ENCODE measurements at regions of chr15 and their contacts with region 1.

Region 1: GRCh38 chr15:57348781-57349180 is 27.5 kb upstream of the CGNL1 start:
- DNase-seq: no peak
- H3K4me3 ChIP-seq: no peak overlapping the region
- H3K27ac ChIP-seq: no peak overlapping the region
- H3K4me1 ChIP-seq: peaks cover 0 to 10% (median 4%) of the 10 kb centered on the region in 4 experiments; a peak in 4 of 7 replicates
- H3K27me3 ChIP-seq: no peaks in the 10 kb centered on the region
- CTCF ChIP-seq: no peak
- EP300 ChIP-seq: no peak
- POLR2A ChIP-seq: no peak
- RAD21 ChIP-seq: no peak

Region 2: DNA sequence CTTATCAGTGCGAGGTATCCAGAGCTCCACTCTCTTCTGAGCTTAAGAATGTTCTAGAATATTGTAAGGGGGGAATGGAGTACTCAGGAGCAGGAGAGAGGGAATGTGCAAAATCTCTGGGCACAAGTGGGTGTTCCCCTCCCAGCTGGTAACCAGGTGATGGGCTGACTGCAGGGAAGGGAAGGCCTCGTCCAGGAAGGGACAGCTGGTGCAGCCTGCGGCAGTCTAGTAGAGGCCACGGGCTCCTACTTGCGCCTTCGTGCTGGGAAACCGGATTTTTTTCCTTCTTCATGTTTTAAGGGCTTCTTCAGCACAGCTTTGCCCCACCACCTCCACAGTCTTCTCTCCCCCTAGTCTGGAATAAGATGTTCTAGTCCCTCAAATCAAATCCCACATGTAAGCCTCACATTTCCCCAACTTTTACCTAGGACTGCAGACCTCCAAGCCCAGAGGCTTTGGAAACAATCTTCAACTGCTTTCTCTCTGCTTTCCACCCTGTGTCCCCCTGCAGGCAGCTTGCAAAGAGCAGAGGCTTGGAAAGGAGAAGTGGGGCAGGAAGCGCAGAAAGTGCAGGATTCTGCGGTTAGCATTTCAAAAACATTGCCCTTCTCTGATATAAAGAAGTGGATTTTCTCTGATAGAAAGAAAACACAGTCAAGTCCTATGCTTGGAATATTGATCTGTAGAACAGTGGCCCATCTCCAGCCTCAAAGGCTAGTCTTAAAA is 15.7 kb after region 1 on chr15:
- CTCF ChIA-PET with region 1: interaction called, 33 read pairs
- POLR2A ChIA-PET with region 1: interaction called, 5 read pairs
- DNase-seq: no peak
- H3K4me3 ChIP-seq: no peak overlapping the region
- H3K27ac ChIP-seq: no peak overlapping the region
- H3K4me1 ChIP-seq: peaks cover 0 to 7% (median 4%) of the 10 kb centered on the region in 4 experiments; a peak in 5 of 7 replicates
- H3K27me3 ChIP-seq: no peaks in the 10 kb centered on the region
- CTCF ChIP-seq: peak; percentile 36 to 54 (median 39); a peak in 3 of 4 replicates
- EP300 ChIP-seq: no peak
- POLR2A ChIP-seq: no peak
- RAD21 ChIP-seq: peak in 1 of 2 experiments; percentile 52; a peak in 2 of 4 replicates

Region 3: GRCh38 chr15:57580866-57581265 is 232.1 kb after region 1 on chr15:
- CTCF ChIA-PET with region 1: no interaction called
- POLR2A ChIA-PET with region 1: no interaction called
- DNase-seq: no peak
- H3K4me3 ChIP-seq: no peak overlapping the region
- H3K27ac ChIP-seq: no peak overlapping the region
- H3K4me1 ChIP-seq: no peaks in the 10 kb centered on the region
- H3K27me3 ChIP-seq: no peaks in the 10 kb centered on the region
- CTCF ChIP-seq: peak in 2 of 3 experiments; percentile 1 to 25; a peak in 1 of 4 replicates
- EP300 ChIP-seq: no peak
- POLR2A ChIP-seq: no peak
- RAD21 ChIP-seq: no peak; a peak in 1 of 4 replicates

Measured in H1 (cell line).